Activated B cell treated with CpG ODN at 0.5 μM for 24 hours (primary cell): ENCODE measurements at regions of chr1 and their contacts with region 1.

Region 1: GRCh38 chr1:203340112-203340804 is 10.7 kb downstream of the FMOD start:
- DNase-seq: no peak
- ATAC-seq: peak; percentile 73
- H3K4me3 Mint-ChIP-seq: no peak overlapping the region
- H3K27ac Mint-ChIP-seq: no peak overlapping the region
- H3K4me1 Mint-ChIP-seq: peaks cover 21% of the 10 kb centered on the region
- H3K27me3 Mint-ChIP-seq: peaks cover 17% of the 10 kb centered on the region
- CTCF ChIP-seq: peak; percentile 35

Region 2: DNA sequence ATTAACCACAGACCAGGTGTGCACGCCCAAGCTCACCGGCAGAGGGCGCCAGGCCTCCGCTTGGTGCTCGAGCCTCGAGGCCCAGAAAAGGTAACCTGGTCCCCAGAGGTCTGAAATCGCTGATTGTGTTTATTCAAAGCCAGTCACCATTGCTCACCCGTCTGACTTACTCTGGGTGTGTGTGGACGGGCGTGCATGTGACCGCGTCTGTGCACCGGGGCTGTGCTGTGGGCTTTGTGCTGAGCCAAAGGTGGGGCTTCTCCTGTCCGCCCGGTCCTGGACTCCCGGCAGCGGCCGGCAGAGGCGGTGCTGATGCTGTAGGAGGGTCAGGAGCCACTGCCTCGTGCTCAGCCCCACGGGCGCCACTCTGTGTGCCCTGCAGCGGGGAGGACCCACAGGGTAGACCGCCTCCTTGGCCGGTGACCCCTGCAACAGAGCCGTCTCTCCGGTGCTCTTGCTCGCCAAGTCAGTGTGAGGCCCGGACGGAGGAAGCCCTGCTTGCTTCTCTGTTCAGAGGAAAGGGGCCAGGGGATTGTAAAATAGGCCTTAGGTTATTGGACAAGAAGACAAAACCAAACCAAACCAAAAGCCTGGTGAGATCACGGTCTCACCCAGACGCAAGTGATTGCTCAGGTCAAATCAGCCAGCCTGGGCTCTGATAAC is 66.9 kb before region 1 on chr1:
- CTCF ChIA-PET with region 1: interaction called, 525 read pairs
- POLR2A ChIA-PET with region 1: interaction called, 122 read pairs
- intact Hi-C with region 1: loop called (anchors 1 kb)
- DNase-seq: peak; percentile 90
- ATAC-seq: peak; percentile 78
- H3K4me3 Mint-ChIP-seq: peak overlapping the region; percentile 87
- H3K27ac Mint-ChIP-seq: peak overlapping the region; percentile 93
- H3K4me1 Mint-ChIP-seq: peaks cover 73% of the 10 kb centered on the region
- H3K27me3 Mint-ChIP-seq: no peaks in the 10 kb centered on the region
- CTCF ChIP-seq: peak; percentile 74

Region 3: DNA sequence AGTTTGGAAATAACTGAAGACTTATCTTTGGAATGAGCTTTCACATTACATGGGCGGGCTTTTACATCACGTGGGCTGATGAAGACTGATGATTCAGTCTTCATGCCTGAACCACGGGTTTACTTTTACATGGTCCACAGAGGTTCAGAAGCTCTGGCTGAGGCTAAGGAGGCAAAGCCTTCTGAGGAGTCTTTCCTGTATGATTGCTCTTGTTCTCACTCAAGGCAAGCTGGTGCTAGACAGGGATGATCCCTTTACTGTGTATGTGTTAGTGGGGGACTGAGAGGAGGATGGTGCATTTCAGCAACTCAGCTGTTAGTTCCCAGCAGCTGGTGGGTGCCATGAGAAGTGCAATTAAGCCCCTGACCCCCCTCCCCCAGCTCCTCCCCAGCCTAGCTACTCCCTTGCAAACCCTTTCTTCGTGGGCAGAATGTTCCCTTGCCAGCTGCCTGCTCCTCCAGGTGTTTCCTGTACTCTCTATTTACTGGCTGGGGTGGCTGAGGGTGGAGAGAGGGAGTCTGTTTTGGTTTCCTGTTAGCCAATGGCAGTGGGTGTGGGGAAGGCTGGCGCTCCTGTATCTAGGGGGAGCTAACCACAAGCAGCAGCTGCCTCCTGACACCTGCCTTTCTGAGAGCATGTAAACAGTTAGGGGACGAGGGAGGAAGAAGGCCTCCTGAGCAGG is 19.5 kb before region 1 on chr1:
- CTCF ChIA-PET with region 1: interaction called, 12 read pairs
- POLR2A ChIA-PET with region 1: interaction called, 76 read pairs
- intact Hi-C with region 1: no loop called
- DNase-seq: peak; percentile 53
- ATAC-seq: peak; percentile 66
- H3K4me3 Mint-ChIP-seq: peak overlapping the region; percentile 72
- H3K27ac Mint-ChIP-seq: peak overlapping the region; percentile 96
- H3K4me1 Mint-ChIP-seq: peaks cover 90% of the 10 kb centered on the region
- H3K27me3 Mint-ChIP-seq: no peaks in the 10 kb centered on the region
- CTCF ChIP-seq: no peak

Region 4: GRCh38 chr1:203381151-203381751 is 41.0 kb after region 1 on chr1:
- CTCF ChIA-PET with region 1: interaction called, 31 read pairs
- POLR2A ChIA-PET with region 1: interaction called, 4 read pairs
- intact Hi-C with region 1: loop called (anchors 2 kb)
- DNase-seq: no peak
- ATAC-seq: peak; percentile 89
- H3K4me3 Mint-ChIP-seq: peak overlapping the region; percentile 59
- H3K27ac Mint-ChIP-seq: peak overlapping the region; percentile 88
- H3K4me1 Mint-ChIP-seq: peaks cover 53% of the 10 kb centered on the region
- H3K27me3 Mint-ChIP-seq: no peaks in the 10 kb centered on the region
- CTCF ChIP-seq: no peak

Region 5: GRCh38 chr1:203504397-203505250 is 164.4 kb after region 1 on chr1:
- CTCF ChIA-PET with region 1: interaction called, 24 read pairs
- POLR2A ChIA-PET with region 1: interaction called, 11 read pairs
- intact Hi-C with region 1: no loop called
- DNase-seq: peak; percentile 45
- ATAC-seq: peak; percentile 57
- H3K4me3 Mint-ChIP-seq: no peak overlapping the region
- H3K27ac Mint-ChIP-seq: peak overlapping the region; percentile 10
- H3K4me1 Mint-ChIP-seq: peaks cover 2% of the 10 kb centered on the region
- H3K27me3 Mint-ChIP-seq: peaks cover 12% of the 10 kb centered on the region
- CTCF ChIP-seq: peak; percentile 83

Region 6: DNA sequence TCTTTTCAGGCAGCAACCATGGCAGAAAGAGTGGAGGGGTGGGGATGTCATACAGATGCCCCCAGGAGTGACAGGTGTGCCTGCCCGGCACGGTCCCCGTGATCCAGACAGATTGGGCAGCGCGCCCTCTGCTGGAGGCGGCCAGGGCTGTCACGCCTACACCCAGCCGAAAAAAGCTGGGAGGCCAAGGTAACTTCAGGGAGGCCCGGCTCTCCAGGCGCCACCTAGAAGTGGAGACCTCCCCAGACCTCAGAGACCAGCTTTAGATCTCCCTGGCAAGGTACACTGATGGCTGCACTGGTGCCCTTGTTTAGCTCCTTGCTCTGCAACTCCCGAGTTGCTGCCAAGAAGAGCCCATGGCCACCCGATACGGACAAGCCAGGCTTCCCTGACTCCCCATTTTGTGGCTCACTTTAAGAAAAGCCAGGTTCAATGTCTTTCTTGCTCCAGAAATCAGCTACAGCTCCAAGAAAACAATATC is 866.9 kb after region 1 on chr1:
- CTCF ChIA-PET with region 1: no interaction called
- POLR2A ChIA-PET with region 1: no interaction called
- intact Hi-C with region 1: no loop called
- DNase-seq: peak; percentile 62
- ATAC-seq: peak; percentile 88
- H3K4me3 Mint-ChIP-seq: no peak overlapping the region
- H3K27ac Mint-ChIP-seq: no peak overlapping the region
- H3K4me1 Mint-ChIP-seq: no peaks in the 10 kb centered on the region
- H3K27me3 Mint-ChIP-seq: peaks cover 23% of the 10 kb centered on the region
- CTCF ChIP-seq: no peak